ENCODE measurements at regions of chr3 and their contacts with region 1.

Region 1: DNA sequence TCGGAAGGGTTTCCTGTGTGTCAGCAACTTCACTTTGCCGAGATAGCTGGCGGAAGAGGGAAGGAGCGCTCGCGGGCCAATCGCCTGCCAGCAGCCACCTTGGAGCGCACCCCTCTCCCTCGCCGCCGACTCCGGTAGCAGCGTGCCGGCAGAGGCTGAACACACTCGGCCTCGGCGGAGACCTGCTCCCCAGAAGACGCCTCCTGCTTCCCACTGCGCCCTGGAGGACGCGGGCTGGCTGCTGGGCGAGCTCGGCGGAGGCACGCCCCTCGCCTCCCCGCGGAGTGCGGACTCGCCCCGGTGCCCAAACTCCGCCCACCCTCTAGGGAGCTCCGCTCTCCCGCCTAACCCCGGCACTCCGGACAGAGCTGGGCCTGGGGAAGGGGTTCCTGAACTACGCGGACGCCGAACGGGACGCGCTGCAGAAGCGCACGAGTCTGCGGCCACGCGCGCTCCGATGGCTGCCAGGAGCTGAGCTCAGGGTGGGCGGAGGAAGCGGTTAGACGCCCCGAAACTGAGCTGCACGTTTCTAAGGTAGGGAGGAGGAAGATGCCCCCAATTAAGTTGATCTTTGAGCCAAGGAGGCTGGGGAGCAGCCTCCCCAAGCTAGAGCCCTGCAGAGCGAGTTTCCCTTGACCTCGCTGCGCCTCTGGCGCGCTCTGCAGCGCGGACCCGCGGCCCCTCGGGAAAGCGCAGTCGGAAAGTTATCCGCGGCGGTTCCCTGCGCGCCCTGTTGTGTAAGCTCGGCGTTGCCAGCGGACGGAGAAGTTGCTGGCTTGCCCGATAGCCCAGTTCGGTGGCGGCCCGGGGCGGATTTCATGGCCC is at the start of gene P2RY1:
- DNase-seq: peak; percentile 76
- CTCF ChIP-seq: peak; percentile 42

Region 2: DNA sequence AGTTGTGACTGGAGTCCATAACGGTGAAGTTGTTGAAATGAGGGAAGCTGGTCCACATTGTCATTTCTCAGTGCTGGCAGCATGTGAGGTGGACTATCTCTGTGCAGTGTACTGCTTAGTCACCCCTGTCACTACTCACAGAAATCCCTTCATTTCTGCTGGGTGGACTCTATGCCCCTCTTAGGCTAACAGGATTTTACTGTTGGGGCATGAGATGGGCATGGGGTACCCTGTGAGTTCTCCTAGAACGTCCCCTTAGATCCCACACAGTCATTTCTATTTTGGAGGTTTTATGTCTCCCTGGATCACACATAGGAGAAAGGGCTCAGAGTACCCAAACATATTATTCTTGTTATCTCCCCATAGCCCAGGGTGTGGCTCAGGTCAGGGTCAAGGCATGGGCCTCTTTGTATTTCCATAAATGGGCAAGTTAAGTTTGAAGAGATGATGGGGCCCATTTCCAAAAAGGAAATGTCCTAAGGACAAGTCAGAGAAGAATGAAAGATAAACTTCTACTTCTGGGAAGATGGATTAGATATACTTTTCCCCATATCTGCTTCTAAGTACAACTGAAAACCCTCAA is 15.1 kb after region 1 on chr3:
- CTCF ChIA-PET with region 1: interaction called, 18 read pairs
- POLR2A ChIA-PET with region 1: no interaction called
- DNase-seq: no peak
- CTCF ChIP-seq: no peak

Measured in GM10248 (cell line).